ENCODE measurements at regions of chr17 and their contacts with region 1.

Region 1: GRCh38 chr17:42347198-42347597 is 41.0 kb downstream of the STAT3 start:
- DNase-seq: no peak
- ATAC-seq: no peak
- H3K4me3 Mint-ChIP-seq: no peak overlapping the region
- H3K27ac Mint-ChIP-seq: peak overlapping the region; percentile 41
- H3K4me1 Mint-ChIP-seq: peaks cover 57% of the 10 kb centered on the region
- H3K27me3 Mint-ChIP-seq: no peaks in the 10 kb centered on the region

Region 2: GRCh38 chr17:42361781-42362186 is 14.6 kb after region 1 on chr17:
- CTCF ChIA-PET with region 1: interaction called, 4 read pairs
- POLR2A ChIA-PET with region 1: interaction called, 13 read pairs
- intact Hi-C with region 1: loop called in 1 of 2 experiments (anchors 1 kb)
- DNase-seq: peak; percentile 77
- ATAC-seq: peak; percentile 92
- H3K4me3 Mint-ChIP-seq: peak overlapping the region; percentile 42
- H3K27ac Mint-ChIP-seq: peak overlapping the region; percentile 83
- H3K4me1 Mint-ChIP-seq: peaks cover 82% of the 10 kb centered on the region
- H3K27me3 Mint-ChIP-seq: no peaks in the 10 kb centered on the region

Measured in activated CD4-positive, alpha-beta T cell treated with anti-CD3 and anti-CD28 coated beads for 36 hours (primary cell).